Activated CD4-positive, alpha-beta T cell treated with anti-CD3 and anti-CD28 coated beads, Interleukin-2, amount 10 ng/mL, durations not matched to agents 24 days and 14 days (primary cell): ENCODE measurements at regions of chr15 and their contacts with region 1.

Region 1: DNA sequence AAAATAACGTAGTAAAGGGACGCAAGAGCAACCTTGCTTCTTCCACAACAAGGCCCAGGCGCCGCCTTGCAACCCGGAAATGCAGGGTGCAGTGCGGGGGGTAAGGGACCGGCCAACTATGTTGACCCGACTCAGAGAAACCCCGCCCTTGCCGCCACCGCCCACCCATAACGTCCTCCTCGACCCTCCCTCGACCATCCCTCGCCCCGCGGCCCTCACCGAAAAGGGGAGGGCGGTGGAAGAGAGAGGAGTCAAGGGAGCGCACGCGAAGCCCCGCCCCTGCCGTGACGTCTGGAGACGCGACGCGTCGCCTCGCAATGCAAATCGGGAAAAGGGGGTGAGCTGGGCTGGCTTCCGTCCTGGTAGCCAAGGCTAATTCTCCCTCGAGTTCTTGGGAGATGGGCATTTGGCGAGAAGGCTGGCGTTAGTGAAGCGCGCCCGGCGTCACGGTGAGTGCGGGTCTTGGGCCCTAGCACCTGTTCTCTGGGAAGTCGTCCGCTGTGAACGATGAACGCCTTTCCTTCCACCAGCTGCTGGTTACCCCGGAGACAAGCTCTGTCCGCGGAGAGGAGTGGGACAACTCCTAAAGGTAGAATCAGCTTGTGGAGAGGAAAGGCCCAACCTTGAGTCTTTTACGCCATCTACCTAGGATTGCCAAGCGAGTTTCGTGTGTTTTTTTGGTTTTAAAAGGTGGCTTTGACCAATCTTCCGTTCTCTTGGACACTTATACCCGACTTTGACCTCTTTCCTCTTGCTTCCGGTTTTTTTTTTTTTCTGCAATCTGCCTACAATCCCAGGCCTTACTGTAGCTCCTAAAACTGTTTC is at the start of gene USP8:
- DNase-seq: peak; percentile 98
- H3K4me3 Mint-ChIP-seq: peak within 1 kb of the TSS; percentile 96
- H3K27ac Mint-ChIP-seq: peak within 1 kb of the TSS; percentile 96
- H3K4me1 Mint-ChIP-seq: peaks cover 19% of the 10 kb centered on the region
- H3K27me3 Mint-ChIP-seq: no peaks in the 10 kb centered on the region
- total RNA-seq, gene USP8: 56.9 and 60.9 TPM in 2 replicates

Region 2: DNA sequence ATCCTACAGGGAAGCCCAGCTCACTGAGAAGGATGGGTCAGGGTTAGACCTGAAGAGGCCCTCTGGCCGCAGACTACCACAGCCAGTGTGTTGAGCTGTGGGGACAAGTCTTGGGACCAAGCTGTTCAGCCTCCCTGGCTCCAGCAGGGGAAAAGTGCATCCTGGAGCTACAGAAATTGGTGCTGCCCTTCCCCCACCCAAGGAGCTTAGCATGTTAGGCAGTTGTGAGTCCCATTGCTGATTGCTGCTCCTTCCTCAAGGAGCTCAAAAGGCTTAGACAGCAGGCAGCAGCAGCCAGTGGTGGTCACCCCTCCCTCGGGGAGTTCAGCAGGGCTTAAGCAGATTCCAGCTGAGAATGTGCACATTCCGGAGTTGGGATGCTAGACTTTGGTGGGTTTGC is 470.9 kb before region 1 on chr15:
- intact Hi-C with region 1: no loop called
- DNase-seq: peak; percentile 37
- H3K4me3 Mint-ChIP-seq: no peak overlapping the region
- H3K27ac Mint-ChIP-seq: no peak overlapping the region
- H3K4me1 Mint-ChIP-seq: no peaks in the 10 kb centered on the region
- H3K27me3 Mint-ChIP-seq: no peaks in the 10 kb centered on the region

Region 3: DNA sequence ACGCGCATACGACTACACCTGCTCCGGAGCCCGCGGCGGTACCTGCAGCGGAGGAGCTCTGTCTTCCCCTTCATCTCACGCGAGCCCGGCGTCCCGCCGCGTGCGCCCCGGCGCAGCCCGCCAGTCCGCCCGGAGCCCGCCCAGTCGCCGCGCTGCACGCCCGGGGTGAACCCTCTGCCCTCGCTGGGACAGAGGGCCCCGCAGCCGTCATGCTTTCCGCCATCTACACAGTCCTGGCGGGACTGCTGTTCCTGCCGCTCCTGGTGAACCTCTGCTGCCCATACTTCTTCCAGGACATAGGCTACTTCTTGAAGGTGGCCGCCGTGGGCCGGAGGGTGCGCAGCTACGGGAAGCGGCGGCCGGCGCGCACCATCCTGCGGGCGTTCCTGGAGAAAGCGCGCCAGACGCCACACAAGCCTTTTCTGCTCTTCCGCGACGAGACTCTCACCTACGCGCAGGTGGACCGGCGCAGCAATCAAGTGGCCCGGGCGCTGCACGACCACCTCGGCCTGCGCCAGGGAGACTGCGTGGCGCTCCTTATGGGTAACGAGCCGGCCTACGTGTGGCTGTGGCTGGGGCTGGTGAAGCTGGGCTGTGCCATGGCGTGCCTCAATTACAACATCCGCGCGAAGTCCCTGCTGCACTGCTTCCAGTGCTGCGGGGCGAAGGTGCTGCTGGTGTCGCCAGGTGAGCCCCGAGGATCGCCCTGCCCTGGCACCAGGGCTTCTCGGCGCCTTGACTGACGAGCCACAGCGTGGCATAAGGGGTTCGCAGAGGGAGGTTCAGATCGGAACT is 241.9 kb before region 1 on chr15:
- intact Hi-C with region 1: loop called (anchors 10 kb)
- DNase-seq: peak; percentile 87
- H3K4me3 Mint-ChIP-seq: peak overlapping the region; percentile 98
- H3K27ac Mint-ChIP-seq: peak overlapping the region; percentile 87
- H3K4me1 Mint-ChIP-seq: peaks cover 51% of the 10 kb centered on the region
- H3K27me3 Mint-ChIP-seq: no peaks in the 10 kb centered on the region

Region 4: GRCh38 chr15:50330921-50331320 is 93.4 kb before region 1 on chr15:
- intact Hi-C with region 1: loop called (anchors 1 kb)
- DNase-seq: peak; percentile 54
- H3K4me3 Mint-ChIP-seq: no peak overlapping the region
- H3K27ac Mint-ChIP-seq: peak overlapping the region; percentile 36
- H3K4me1 Mint-ChIP-seq: peaks cover 26% of the 10 kb centered on the region
- H3K27me3 Mint-ChIP-seq: no peaks in the 10 kb centered on the region

Region 5: GRCh38 chr15:50377867-50378751 is 46.2 kb before region 1 on chr15:
- intact Hi-C with region 1: loop called (anchors 1 kb)
- DNase-seq: no peak
- H3K4me3 Mint-ChIP-seq: peak overlapping the region; percentile 7
- H3K27ac Mint-ChIP-seq: peak overlapping the region; percentile 88
- H3K4me1 Mint-ChIP-seq: peaks cover 13% of the 10 kb centered on the region
- H3K27me3 Mint-ChIP-seq: no peaks in the 10 kb centered on the region

Region 6: GRCh38 chr15:50686468-50687301 is 262.4 kb after region 1 on chr15 and contains the start of gene TRPM7:
- intact Hi-C with region 1: loop called (anchors 1 kb)
- DNase-seq: peak; percentile 97
- H3K4me3 Mint-ChIP-seq: peak within 1 kb of the TSS; percentile 99
- H3K27ac Mint-ChIP-seq: peak within 1 kb of the TSS; percentile 99
- H3K4me1 Mint-ChIP-seq: peaks cover 41% of the 10 kb centered on the region
- H3K27me3 Mint-ChIP-seq: no peaks in the 10 kb centered on the region
- total RNA-seq, gene TRPM7: 39.4 and 41.5 TPM in 2 replicates

Region 7: DNA sequence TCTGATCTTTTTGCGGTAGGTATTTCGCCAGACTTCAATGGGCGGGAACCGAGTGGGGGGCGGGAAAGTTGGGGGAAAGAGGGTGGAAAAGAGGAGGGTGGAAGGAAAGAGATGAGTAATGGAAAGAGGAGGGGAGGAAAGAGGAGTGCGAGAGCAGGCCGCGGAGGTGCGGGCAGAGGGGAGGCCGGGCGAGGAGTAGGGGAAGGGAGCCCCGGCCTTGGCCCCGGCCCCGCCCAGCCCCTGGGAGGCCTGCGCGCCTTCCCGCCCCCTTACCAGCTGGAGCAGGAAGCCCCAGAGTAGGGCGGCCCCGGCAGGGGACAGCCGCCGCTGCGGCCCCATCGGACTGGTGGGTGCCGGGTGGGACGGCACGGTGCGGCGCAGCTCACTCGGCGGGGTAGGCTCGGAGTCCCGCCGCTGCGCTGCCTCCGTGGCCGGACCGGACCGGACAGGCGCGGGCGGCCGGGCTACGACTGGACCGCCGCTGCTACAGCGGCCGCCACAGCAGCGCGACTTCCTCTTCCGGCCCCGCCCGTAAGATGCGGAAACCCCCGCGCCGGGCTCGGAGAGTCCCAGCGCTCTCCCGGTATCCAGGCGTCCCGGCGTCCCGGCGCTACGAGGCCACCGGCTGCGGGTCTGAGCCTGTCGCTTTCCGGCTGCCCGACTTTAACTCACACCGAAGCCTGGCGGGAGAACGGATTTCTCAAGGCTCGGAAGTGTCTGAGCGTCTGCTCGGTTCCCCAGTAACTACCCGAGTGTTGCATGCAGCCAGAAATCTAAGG is 341.1 kb after region 1 on chr15 and contains the start of gene SPPL2A:
- intact Hi-C with region 1: loop called (anchors 1 kb)
- DNase-seq: peak; percentile 94
- H3K4me3 Mint-ChIP-seq: peak within 1 kb of the TSS; percentile 92
- H3K27ac Mint-ChIP-seq: peak within 1 kb of the TSS; percentile 97
- H3K4me1 Mint-ChIP-seq: peaks cover 54% of the 10 kb centered on the region
- H3K27me3 Mint-ChIP-seq: no peaks in the 10 kb centered on the region
- total RNA-seq, gene SPPL2A: 85.0 and 86.6 TPM in 2 replicates